ENCODE measurements at regions of chr5 and their contacts with region 1.

Region 1: DNA sequence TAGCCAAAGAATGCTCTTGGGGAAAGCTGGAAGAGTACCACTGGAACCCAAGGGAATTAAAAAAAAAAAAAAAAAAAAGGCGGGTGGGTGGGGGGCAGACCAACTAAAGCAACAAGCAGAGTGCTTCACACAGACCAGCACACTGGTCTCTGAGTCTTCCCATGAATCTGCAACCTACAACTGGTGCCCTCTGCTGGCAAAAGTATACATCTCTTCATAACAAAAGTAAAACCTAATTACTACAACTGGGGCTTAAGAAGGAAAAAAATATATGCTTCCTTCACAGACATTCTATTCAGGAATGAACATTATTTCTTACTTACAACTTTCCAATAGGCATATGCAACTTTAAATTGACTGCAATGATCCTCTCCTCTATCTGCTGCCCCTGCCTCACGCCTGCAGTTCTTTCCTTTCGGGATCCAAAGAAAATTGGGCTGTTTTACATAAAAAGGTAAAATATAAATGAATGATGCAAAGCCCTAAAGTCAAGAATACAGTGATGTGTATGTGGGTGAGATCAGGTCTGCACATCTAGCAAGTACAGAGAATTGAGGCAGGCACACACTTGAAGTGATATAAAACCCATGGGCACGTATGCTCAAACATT is 7.2 kb upstream of the KLHL3 start:
- DNase-seq: peak; percentile 48 to 77
- ATAC-seq: peak; percentile 89 to 91
- H3K4me3 ChIP-seq: no peak overlapping the region
- H3K27ac ChIP-seq: no peak overlapping the region
- H3K4me1 ChIP-seq: no peaks in the 10 kb centered on the region
- CTCF ChIP-seq: peak; percentile 77
- EP300 ChIP-seq: no peak
- POLR2A ChIP-seq: no peak
- RAD21 ChIP-seq: peak; percentile 67 to 69

Region 2: DNA sequence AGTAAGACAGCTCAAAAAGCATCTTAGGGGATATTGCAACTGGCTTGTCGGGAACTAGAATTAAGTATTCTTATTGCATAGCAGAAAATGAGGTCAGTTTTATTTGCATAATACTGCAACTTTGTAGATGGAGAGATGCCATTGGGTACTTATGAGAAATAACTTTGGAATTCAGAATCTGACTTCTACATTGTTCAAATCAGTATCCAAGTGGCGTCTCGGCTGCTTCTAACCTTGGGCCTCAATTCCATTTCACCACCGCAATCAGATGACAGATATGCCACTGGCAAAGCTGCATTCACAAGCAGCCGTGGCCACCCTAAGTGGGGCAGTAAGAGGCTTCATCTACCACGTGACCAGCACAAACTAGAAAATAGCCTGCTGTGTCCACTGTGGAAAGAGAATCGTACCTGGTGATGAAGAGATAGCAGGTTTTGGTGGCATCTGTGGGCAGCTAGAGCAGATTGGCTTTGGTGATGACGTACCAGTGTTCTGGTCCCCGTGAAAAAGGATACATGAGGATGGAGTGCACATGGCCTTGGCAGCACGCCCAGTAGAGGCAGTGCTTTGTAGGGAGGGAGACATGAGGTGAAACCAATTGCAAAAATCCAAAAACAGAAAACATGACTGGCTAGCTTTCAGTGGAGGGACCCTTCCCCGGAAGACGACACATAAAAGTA is 123.8 kb before region 1 on chr5:
- CTCF ChIA-PET with region 1: interaction called, 16 read pairs
- POLR2A ChIA-PET with region 1: no interaction called
- DNase-seq: no peak
- ATAC-seq: no peak
- H3K4me3 ChIP-seq: no peak overlapping the region
- H3K27ac ChIP-seq: no peak overlapping the region
- H3K4me1 ChIP-seq: no peaks in the 10 kb centered on the region
- CTCF ChIP-seq: no peak
- EP300 ChIP-seq: no peak
- POLR2A ChIP-seq: no peak
- RAD21 ChIP-seq: no peak

Region 3: DNA sequence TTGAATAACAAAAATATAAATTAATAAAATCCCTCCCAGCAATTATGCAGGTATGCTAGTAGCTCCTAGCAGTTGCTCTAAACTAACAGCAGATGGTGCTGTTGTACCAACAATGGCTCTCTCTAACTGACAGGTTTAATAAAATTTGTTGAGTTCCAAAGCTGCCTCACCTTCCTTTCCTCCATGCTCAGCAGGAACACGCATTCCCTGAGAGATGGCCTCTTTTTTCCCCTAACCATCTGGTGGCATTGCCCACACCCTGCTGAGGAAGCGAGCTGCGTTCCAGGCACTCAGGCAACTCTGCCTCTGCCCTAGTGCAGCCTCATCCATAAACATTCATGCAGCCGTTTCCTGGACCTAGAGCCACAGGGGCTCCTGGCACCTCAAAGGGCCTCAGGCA is 113.5 kb before region 1 on chr5:
- CTCF ChIA-PET with region 1: interaction called, 135 read pairs
- POLR2A ChIA-PET with region 1: no interaction called
- DNase-seq: peak; percentile 60 to 77
- ATAC-seq: peak; percentile 66 to 92
- H3K4me3 ChIP-seq: no peak overlapping the region
- H3K27ac ChIP-seq: no peak overlapping the region
- H3K4me1 ChIP-seq: no peaks in the 10 kb centered on the region
- CTCF ChIP-seq: peak; percentile 87
- EP300 ChIP-seq: no peak
- POLR2A ChIP-seq: no peak
- RAD21 ChIP-seq: peak; percentile 89 to 91

Region 4: DNA sequence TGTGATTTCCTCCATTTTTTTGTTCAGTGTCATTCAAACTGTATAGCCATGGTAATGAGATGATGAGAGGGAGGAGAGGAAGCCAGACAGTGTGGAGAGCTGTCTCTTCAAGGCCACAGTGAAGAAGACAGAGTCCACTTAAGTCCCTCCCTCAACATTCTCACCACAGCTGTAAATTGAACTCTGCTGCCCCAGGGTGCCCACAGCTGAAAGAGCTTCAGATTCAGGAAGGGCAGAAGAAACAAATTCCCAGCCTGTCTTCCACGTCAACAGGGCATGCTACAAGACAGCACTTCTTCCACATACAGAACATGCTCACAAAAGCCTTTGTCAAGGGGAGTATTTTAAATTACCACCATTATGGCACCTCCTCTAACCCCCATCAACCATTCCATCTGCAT is 107.6 kb before region 1 on chr5:
- CTCF ChIA-PET with region 1: interaction called, 135 read pairs
- POLR2A ChIA-PET with region 1: no interaction called
- DNase-seq: no peak
- ATAC-seq: no peak; a peak in 1 of 6 replicates
- H3K4me3 ChIP-seq: no peak overlapping the region
- H3K27ac ChIP-seq: no peak overlapping the region
- H3K4me1 ChIP-seq: no peaks in the 10 kb centered on the region
- CTCF ChIP-seq: no peak
- EP300 ChIP-seq: no peak
- POLR2A ChIP-seq: no peak
- RAD21 ChIP-seq: no peak

Region 5: DNA sequence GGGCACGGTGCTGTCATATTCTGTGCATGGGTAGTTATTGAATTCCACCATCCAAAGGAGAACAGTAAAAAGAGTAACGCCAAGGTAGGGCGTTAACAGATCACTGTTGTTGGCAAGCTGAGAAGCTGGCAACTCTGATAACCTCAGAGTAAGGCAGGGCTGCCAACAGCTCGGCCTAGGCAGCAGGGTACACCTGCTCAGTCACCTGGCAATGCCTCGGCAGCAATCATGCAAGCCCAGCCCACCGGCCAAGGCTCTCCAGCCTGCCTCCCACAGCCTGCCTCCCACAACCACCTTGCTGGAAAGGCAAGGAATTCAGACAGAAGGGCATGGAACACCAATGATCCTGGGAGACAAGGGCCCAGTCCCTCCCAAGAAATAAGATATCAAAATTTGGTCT is 71.1 kb before region 1 on chr5:
- CTCF ChIA-PET with region 1: interaction called, 12 read pairs
- POLR2A ChIA-PET with region 1: no interaction called
- DNase-seq: no peak
- ATAC-seq: no peak
- H3K4me3 ChIP-seq: no peak overlapping the region
- H3K27ac ChIP-seq: no peak overlapping the region
- H3K4me1 ChIP-seq: peaks cover 6% of the 10 kb centered on the region; the same call in 1 of the 3 replicates
- CTCF ChIP-seq: no peak
- EP300 ChIP-seq: no peak
- POLR2A ChIP-seq: no peak
- RAD21 ChIP-seq: no peak

Region 6: GRCh38 chr5:137730336-137730735 is 12.8 kb before region 1 on chr5:
- CTCF ChIA-PET with region 1: interaction called, 36 read pairs
- POLR2A ChIA-PET with region 1: no interaction called
- DNase-seq: no peak
- ATAC-seq: no peak
- H3K4me3 ChIP-seq: no peak overlapping the region
- H3K27ac ChIP-seq: no peak overlapping the region
- H3K4me1 ChIP-seq: no peaks in the 10 kb centered on the region
- CTCF ChIP-seq: no peak
- EP300 ChIP-seq: no peak
- POLR2A ChIP-seq: no peak
- RAD21 ChIP-seq: no peak

Region 7: GRCh38 chr5:137754126-137754960 is 11.2 kb after region 1 on chr5 and contains the start of gene HNRNPA0:
- CTCF ChIA-PET with region 1: interaction called, 17 read pairs
- POLR2A ChIA-PET with region 1: interaction called, 4 read pairs
- DNase-seq: peak; percentile 97 to 98
- ATAC-seq: peak; percentile 93 to 94
- H3K4me3 ChIP-seq: peak within 1 kb of the TSS; percentile 78
- H3K27ac ChIP-seq: peak within 1 kb of the TSS; percentile 92 to 97
- H3K4me1 ChIP-seq: peaks cover 37% of the 10 kb centered on the region
- CTCF ChIP-seq: no peak
- EP300 ChIP-seq: no peak
- POLR2A ChIP-seq: peak; percentile 92
- RAD21 ChIP-seq: no peak
- polyA plus RNA-seq, gene HNRNPA0: 13.6 and 17.0 TPM in 2 replicates